ENCODE measurements at regions of chr5 and their contacts with region 1.

Region 1: DNA sequence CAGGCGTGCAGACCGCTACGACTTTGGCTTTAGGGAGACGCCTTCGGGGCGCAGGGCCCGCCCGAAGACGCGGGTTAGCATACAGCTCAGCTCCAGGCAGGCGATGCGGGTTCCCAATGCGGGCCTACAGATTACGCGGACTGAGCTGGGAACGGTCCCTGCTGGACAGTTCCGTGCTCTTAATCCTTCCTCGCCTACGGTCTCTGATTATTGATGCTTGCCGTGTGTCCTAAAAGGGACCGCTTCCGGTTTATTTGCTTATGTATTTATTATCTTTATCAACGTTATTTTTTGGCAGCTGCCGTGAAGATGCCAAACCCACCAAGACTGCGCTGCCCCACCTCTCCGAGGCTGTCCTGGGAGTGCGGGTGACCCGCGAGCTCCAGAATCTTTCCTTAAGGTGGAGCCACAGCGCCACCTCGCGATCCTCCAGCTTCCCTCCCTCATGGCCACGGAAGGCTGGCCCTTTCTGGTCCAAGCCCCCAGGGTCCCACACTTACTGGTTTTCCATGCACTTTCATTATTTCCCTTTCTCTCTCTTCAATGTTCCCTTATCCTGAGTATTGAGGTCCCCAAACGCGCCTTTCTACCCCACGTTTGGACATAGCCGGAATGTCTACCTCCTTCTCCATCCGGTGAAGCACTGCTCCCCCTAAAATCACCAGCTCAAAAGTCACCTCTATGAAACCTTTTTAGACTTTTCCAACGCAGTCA is 7.0 kb upstream of the EBF1 start:
- DNase-seq: peak; percentile 49 to 83 (median 61)
- ATAC-seq: peak; percentile 77
- H3K4me3 ChIP-seq: peak overlapping the region; percentile 52
- H3K4me3 Mint-ChIP-seq: peak overlapping the region; percentile 72
- H3K27ac ChIP-seq: no peak overlapping the region
- H3K27ac Mint-ChIP-seq: no peak overlapping the region
- H3K4me1 ChIP-seq: peaks cover 23% of the 10 kb centered on the region
- H3K4me1 Mint-ChIP-seq: peaks cover 28% of the 10 kb centered on the region
- H3K27me3 ChIP-seq: peaks cover 43 to 49% of the 10 kb centered on the region in 2 experiments
- H3K27me3 Mint-ChIP-seq: peaks cover 78% of the 10 kb centered on the region
- CTCF ChIP-seq: peak; percentile 98

Region 2: DNA sequence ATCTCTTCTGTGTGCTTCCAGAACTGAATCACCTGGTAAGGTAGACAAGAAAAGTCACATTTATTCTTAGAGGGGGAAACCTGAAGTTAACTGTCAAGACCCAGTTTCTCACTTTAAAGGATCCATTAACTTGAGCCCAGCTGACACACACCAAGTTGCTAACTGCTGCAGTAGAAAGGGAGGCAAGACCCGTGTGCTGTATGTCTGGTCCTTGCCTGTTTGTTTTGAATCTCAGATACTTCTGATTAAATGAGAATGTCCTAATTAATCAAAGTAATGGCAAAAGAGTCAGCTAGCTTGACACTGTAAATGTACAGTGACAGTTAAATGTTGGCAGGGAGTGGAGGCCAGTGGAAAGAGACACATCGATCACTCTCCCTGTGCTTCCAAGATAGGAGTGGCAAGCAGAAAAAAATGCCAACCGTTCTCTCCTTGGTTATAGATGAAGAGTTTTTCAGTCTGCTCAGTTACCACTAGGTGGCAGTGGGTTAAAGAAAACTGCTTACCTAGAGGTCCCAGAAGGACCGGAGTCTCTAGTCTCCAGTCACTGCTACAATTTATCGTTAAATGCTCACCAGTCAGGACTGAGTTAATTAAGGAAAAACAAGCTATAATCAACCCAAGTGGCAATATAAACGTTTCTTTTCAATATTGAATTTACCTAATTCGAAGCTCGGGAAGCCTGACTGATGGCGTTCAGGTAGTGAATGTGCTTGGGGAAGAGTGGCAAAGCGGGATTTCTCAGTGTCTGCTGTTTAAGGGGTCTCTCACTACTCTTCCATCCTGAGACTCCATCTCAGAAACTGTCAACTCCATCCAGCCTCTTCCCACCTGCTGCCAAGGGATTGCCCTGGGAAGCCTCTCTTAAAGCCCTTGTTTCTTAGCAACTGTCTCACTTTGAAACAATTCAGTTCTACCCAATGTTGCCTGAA is 1344.8 kb before region 1 on chr5:
- CTCF ChIA-PET with region 1: no interaction called
- POLR2A ChIA-PET with region 1: interaction called, 3 read pairs
- intact Hi-C with region 1: loop called in 1 of 2 experiments (anchors 10 kb)
- DNase-seq: peak in 4 of 14 experiments; percentile 30 to 66 (median 59)
- ATAC-seq: peak; percentile 82
- H3K4me3 ChIP-seq: no peak overlapping the region
- H3K4me3 Mint-ChIP-seq: no peak overlapping the region
- H3K27ac ChIP-seq: no peak overlapping the region
- H3K27ac Mint-ChIP-seq: no peak overlapping the region
- H3K4me1 ChIP-seq: no peaks in the 10 kb centered on the region
- H3K4me1 Mint-ChIP-seq: peaks cover 6% of the 10 kb centered on the region
- H3K27me3 ChIP-seq: no peaks in the 10 kb centered on the region
- H3K27me3 Mint-ChIP-seq: no peaks in the 10 kb centered on the region
- CTCF ChIP-seq: peak; percentile 88

Region 3: GRCh38 chr5:157858527-157859226 is 1248.0 kb before region 1 on chr5 and contains the start of gene CLINT1:
- CTCF ChIA-PET with region 1: no interaction called
- POLR2A ChIA-PET with region 1: no interaction called
- intact Hi-C with region 1: loop called in 1 of 2 experiments (anchors 10 kb)
- DNase-seq: peak; percentile 78 to 94 (median 86)
- ATAC-seq: peak; percentile 95
- H3K4me3 ChIP-seq: peak within 1 kb of the TSS; percentile 84
- H3K4me3 Mint-ChIP-seq: peak within 1 kb of the TSS; percentile 99
- H3K27ac ChIP-seq: peak within 1 kb of the TSS; percentile 81 to 89
- H3K27ac Mint-ChIP-seq: peak within 1 kb of the TSS; percentile 94
- H3K4me1 ChIP-seq: peaks cover 40% of the 10 kb centered on the region
- H3K4me1 Mint-ChIP-seq: peaks cover 83% of the 10 kb centered on the region
- H3K27me3 ChIP-seq: no peaks in the 10 kb centered on the region
- H3K27me3 Mint-ChIP-seq: no peaks in the 10 kb centered on the region
- CTCF ChIP-seq: no peak
- total RNA-seq, gene CLINT1: 89.9 to 91.3 TPM

Region 4: GRCh38 chr5:158174918-158175851 is 931.5 kb before region 1 on chr5:
- CTCF ChIA-PET with region 1: interaction called, 9 read pairs
- POLR2A ChIA-PET with region 1: interaction called, 13 read pairs
- intact Hi-C with region 1: loop called (anchors 1 to 2 kb)
- DNase-seq: peak; percentile 3 to 70 (median 29)
- ATAC-seq: peak; percentile 52
- H3K4me3 ChIP-seq: no peak overlapping the region
- H3K4me3 Mint-ChIP-seq: no peak overlapping the region
- H3K27ac ChIP-seq: no peak overlapping the region
- H3K27ac Mint-ChIP-seq: no peak overlapping the region
- H3K4me1 ChIP-seq: no peaks in the 10 kb centered on the region
- H3K4me1 Mint-ChIP-seq: no peaks in the 10 kb centered on the region
- H3K27me3 ChIP-seq: peaks cover 0 to 3% of the 10 kb centered on the region in 2 experiments
- H3K27me3 Mint-ChIP-seq: no peaks in the 10 kb centered on the region
- CTCF ChIP-seq: peak; percentile 55

Region 5: DNA sequence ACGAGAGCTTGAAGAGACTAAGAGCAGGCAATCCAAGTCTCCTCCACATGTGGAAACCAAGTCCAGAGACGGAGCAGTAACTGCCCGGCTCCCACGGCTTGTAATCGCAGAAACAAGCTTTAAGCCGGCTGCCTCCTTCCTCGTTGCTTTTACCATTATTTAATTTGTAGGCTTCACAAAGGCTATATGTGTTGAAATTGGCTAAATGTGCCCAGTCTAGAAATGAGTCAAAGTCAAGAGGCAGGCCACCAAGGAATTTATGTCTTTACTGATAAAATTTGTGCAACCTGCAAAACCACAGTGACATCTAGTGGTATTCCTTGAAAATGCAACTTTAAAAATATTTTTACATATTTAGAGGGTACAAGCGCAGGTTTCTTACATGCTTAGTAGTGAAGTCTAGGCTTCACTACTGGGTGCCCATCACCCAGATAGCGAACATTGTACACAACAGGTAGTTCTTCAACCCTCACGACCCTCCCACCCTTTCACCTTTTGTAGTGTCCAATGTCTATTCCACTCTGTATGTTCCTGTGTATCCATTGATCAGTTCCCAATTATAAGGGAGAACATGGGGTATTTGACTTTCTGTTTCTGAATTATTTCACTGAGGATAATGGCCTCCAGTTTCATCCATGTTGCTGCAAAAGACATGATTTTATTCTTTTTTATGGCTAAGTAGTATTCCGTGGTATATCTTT is 26.5 kb after region 1 on chr5:
- CTCF ChIA-PET with region 1: no interaction called
- POLR2A ChIA-PET with region 1: interaction called, 3 read pairs
- intact Hi-C with region 1: loop called in 1 of 2 experiments (anchors 2 kb)
- DNase-seq: peak in 3 of 14 experiments; percentile 45 to 65 (median 64)
- ATAC-seq: peak; percentile 37
- H3K4me3 ChIP-seq: no peak overlapping the region
- H3K4me3 Mint-ChIP-seq: no peak overlapping the region
- H3K27ac ChIP-seq: no peak overlapping the region
- H3K27ac Mint-ChIP-seq: no peak overlapping the region
- H3K4me1 ChIP-seq: no peaks in the 10 kb centered on the region
- H3K4me1 Mint-ChIP-seq: no peaks in the 10 kb centered on the region
- H3K27me3 ChIP-seq: no peaks in the 10 kb centered on the region
- H3K27me3 Mint-ChIP-seq: peaks cover 10% of the 10 kb centered on the region
- CTCF ChIP-seq: peak; percentile 97

Region 6: GRCh38 chr5:159257007-159257406 is 150.3 kb after region 1 on chr5:
- CTCF ChIA-PET with region 1: no interaction called
- POLR2A ChIA-PET with region 1: no interaction called
- intact Hi-C with region 1: no loop called
- DNase-seq: no peak
- ATAC-seq: no peak
- H3K4me3 ChIP-seq: no peak overlapping the region
- H3K4me3 Mint-ChIP-seq: no peak overlapping the region
- H3K27ac ChIP-seq: no peak overlapping the region
- H3K27ac Mint-ChIP-seq: no peak overlapping the region
- H3K4me1 ChIP-seq: peaks cover 6% of the 10 kb centered on the region
- H3K4me1 Mint-ChIP-seq: peaks cover 12% of the 10 kb centered on the region
- H3K27me3 ChIP-seq: no peaks in the 10 kb centered on the region
- H3K27me3 Mint-ChIP-seq: no peaks in the 10 kb centered on the region
- CTCF ChIP-seq: no peak